ENCODE measurements at regions of chr1 and their contacts with region 1.

Region 1: GRCh38 chr1:32221980-32222755 is at the starts of genes EIF3I and TMEM234:
- DNase-seq: no peak
- ATAC-seq: peak; percentile 99
- H3K4me3 ChIP-seq: peak within 1 kb of the TSS; percentile 95 to 99
- H3K27ac ChIP-seq: peak within 1 kb of the TSS; percentile 98
- H3K4me1 ChIP-seq: peaks cover 19% of the 10 kb centered on the region
- H3K27me3 ChIP-seq: no peaks in the 10 kb centered on the region
- CTCF ChIP-seq: no peak
- total RNA-seq, gene EIF3I: 294 TPM
- total RNA-seq, gene TMEM234: 23.3 TPM

Region 2: GRCh38 chr1:32276032-32276782 is 54.0 kb after region 1 on chr1:
- CTCF ChIA-PET with region 1: no interaction called
- POLR2A ChIA-PET with region 1: no interaction called
- in situ Hi-C with region 1: no loop called
- intact Hi-C with region 1: no loop called
- DNase-seq: no peak
- ATAC-seq: no peak
- H3K4me3 ChIP-seq: no peak overlapping the region
- H3K27ac ChIP-seq: no peak overlapping the region
- H3K4me1 ChIP-seq: peaks cover 12% of the 10 kb centered on the region; the same call in 1 of the 2 replicates
- H3K27me3 ChIP-seq: no peaks in the 10 kb centered on the region
- CTCF ChIP-seq: no peak

Region 3: GRCh38 chr1:32867151-32867550 is 645.0 kb after region 1 on chr1:
- CTCF ChIA-PET with region 1: no interaction called
- POLR2A ChIA-PET with region 1: interaction called, 14 read pairs
- in situ Hi-C with region 1: no loop called
- intact Hi-C with region 1: no loop called
- DNase-seq: no peak
- ATAC-seq: no peak
- H3K4me3 ChIP-seq: no peak overlapping the region
- H3K27ac ChIP-seq: no peak overlapping the region
- H3K4me1 ChIP-seq: peaks cover 11% of the 10 kb centered on the region
- H3K27me3 ChIP-seq: no peaks in the 10 kb centered on the region
- CTCF ChIP-seq: no peak

Measured in Panc1 (cell line).